Activated CD4-positive, alpha-beta memory T cell treated with anti-CD3 and anti-CD28 coated beads for 36 hours (primary cell): ENCODE measurements at regions of chr2 and their contacts with region 1.

Region 1: GRCh38 chr2:219119422-219120043 is 41.1 kb downstream of the NHEJ1 start:
- DNase-seq: peak; percentile 71
- H3K4me3 Mint-ChIP-seq: no peak overlapping the region
- H3K27ac Mint-ChIP-seq: no peak overlapping the region
- H3K4me1 Mint-ChIP-seq: peaks cover 7% of the 10 kb centered on the region
- H3K27me3 Mint-ChIP-seq: no peaks in the 10 kb centered on the region

Region 2: GRCh38 chr2:219029829-219030165 is 89.7 kb before region 1 on chr2:
- CTCF ChIA-PET with region 1: interaction called, 81 read pairs
- POLR2A ChIA-PET with region 1: no interaction called
- intact Hi-C with region 1: loop called (anchors 1 kb)
- DNase-seq: peak; percentile 85
- H3K4me3 Mint-ChIP-seq: no peak overlapping the region
- H3K27ac Mint-ChIP-seq: no peak overlapping the region
- H3K4me1 Mint-ChIP-seq: no peaks in the 10 kb centered on the region
- H3K27me3 Mint-ChIP-seq: peaks cover 20% of the 10 kb centered on the region

Region 3: GRCh38 chr2:219057709-219058540 is 61.6 kb before region 1 on chr2:
- CTCF ChIA-PET with region 1: interaction called, 238 read pairs
- POLR2A ChIA-PET with region 1: no interaction called
- intact Hi-C with region 1: loop called (anchors 1 kb)
- DNase-seq: peak; percentile 87
- H3K4me3 Mint-ChIP-seq: peak overlapping the region; percentile 46
- H3K27ac Mint-ChIP-seq: no peak overlapping the region
- H3K4me1 Mint-ChIP-seq: peaks cover 26% of the 10 kb centered on the region
- H3K27me3 Mint-ChIP-seq: peaks cover 62% of the 10 kb centered on the region

Region 4: DNA sequence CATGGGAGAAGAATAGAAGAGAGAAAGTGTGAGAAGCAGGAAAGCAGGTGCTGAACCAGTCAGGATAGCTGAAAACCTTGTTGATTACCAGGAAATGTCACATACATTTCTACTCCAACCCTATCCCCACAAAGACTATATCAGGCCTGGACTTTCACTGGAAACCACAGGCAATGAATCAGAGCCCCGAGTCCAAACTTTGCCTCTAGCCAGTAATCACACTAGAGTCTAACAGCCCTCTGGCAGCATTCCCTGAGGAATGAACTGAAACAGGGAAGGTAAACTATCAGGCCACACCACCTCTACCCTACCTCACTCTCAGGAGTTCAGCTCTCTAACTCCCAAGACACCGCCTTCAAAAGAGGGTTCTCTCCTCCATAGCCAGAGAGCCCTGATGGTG is 40.1 kb before region 1 on chr2:
- CTCF ChIA-PET with region 1: interaction called, 166 read pairs
- POLR2A ChIA-PET with region 1: no interaction called
- intact Hi-C with region 1: no loop called
- DNase-seq: no peak
- H3K4me3 Mint-ChIP-seq: no peak overlapping the region
- H3K27ac Mint-ChIP-seq: no peak overlapping the region
- H3K4me1 Mint-ChIP-seq: no peaks in the 10 kb centered on the region
- H3K27me3 Mint-ChIP-seq: no peaks in the 10 kb centered on the region

Region 5: DNA sequence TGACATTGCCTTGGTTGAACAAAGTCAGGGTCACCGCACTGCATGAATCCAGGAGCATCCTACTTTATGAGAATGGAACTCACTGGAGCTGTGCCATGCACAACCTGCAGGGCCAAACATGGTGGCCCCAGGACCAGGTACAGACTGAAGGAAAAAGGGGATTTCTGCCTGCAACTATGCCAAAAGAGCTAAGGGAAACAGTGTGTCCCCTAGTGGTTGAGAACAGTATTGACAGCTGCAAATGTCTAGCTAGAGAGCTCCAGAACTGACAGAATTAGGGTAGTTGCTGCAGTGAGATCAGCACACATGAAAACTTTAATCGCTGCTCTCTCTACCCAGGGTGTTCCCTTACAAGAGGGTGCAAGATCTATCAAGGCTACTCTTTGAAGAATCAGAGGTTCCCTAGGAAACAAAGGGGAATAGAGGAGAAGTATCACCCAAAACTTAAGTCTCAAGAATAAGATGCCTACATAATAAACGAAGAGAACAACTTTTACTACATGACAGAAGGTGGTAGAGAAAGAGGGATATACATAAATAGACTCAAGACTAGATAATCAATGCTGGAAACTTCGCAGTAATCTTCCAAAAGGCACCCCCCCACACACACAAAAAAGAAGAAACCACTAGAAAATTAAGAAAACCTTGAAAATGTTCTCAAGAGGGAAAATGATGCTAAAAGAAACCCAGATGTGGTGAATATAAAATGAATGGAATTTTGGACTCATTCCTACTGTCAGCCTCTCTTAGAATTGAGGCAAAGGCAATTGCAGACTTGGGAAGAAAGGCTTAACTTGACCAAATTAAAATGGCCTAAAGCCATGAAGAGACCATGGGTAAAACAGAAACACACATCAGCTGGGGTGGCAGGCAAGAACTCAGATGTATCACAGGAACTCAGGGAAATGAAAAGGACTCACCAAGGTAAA is 15.2 kb before region 1 on chr2:
- CTCF ChIA-PET with region 1: interaction called, 35 read pairs
- POLR2A ChIA-PET with region 1: no interaction called
- intact Hi-C with region 1: no loop called
- DNase-seq: peak; percentile 18
- H3K4me3 Mint-ChIP-seq: no peak overlapping the region
- H3K27ac Mint-ChIP-seq: peak overlapping the region; percentile 53
- H3K4me1 Mint-ChIP-seq: peaks cover 29% of the 10 kb centered on the region
- H3K27me3 Mint-ChIP-seq: no peaks in the 10 kb centered on the region

Region 6: GRCh38 chr2:219142329-219142728 is 22.8 kb after region 1 on chr2:
- CTCF ChIA-PET with region 1: interaction called, 10 read pairs
- POLR2A ChIA-PET with region 1: no interaction called
- intact Hi-C with region 1: no loop called
- DNase-seq: no peak
- H3K4me3 Mint-ChIP-seq: no peak overlapping the region
- H3K27ac Mint-ChIP-seq: no peak overlapping the region
- H3K4me1 Mint-ChIP-seq: no peaks in the 10 kb centered on the region
- H3K27me3 Mint-ChIP-seq: no peaks in the 10 kb centered on the region